Activated CD8-positive, alpha-beta memory T cell treated with anti-CD3 and anti-CD28 coated beads, Interleukin-2, amount 10 ng/mL, durations not matched to agents 7 days and 5 days (primary cell): ENCODE measurements at regions of chr5 and their contacts with region 1.

Region 1: DNA sequence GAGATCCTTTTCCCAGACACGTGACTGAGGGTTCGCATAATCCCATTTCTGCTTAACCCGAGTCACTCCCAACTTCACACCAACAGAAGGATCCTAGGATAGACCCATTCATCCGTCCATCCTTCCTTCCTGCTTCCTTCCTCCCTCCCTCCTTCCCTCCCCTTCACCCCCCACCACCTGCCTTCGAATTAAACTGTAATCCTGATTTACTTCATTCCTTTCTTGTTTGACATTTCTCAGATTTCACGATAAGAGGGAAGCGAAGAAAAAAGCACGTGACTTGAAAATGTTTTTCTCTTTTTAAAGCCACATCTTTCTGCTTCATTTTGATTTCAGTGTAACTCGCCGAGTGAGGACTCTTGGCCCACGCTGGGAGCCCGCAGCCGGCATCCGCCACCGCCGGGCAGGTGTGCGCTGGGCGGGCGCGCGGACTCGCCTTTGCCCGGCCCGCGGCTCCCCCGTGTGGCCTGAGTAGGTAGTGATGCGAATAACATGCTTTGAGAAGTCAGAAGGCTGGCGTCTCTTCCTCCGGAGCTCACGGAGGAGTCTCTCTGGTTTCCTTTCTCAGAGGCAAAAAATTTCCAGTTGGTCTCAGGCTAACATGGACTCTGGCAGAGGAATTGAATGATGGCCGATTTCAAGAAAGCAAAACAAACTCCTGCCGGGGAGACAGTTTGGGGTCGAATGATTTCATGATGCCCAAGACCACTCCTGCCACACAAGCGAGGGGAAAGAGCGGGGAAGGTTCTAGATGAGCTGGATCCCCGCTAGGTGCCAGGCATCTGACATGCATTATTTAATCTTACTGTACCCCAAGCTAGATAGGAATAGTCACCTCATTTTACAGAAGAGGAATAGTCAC is 117.7 kb downstream of the SLC12A2 start:
- DNase-seq: peak; percentile 85
- ATAC-seq: peak; percentile 97
- H3K4me3 Mint-ChIP-seq: peak overlapping the region; percentile 4
- H3K27ac Mint-ChIP-seq: no peak overlapping the region
- H3K4me1 Mint-ChIP-seq: peaks cover 12% of the 10 kb centered on the region
- H3K27me3 Mint-ChIP-seq: peaks cover 3% of the 10 kb centered on the region

Region 2: DNA sequence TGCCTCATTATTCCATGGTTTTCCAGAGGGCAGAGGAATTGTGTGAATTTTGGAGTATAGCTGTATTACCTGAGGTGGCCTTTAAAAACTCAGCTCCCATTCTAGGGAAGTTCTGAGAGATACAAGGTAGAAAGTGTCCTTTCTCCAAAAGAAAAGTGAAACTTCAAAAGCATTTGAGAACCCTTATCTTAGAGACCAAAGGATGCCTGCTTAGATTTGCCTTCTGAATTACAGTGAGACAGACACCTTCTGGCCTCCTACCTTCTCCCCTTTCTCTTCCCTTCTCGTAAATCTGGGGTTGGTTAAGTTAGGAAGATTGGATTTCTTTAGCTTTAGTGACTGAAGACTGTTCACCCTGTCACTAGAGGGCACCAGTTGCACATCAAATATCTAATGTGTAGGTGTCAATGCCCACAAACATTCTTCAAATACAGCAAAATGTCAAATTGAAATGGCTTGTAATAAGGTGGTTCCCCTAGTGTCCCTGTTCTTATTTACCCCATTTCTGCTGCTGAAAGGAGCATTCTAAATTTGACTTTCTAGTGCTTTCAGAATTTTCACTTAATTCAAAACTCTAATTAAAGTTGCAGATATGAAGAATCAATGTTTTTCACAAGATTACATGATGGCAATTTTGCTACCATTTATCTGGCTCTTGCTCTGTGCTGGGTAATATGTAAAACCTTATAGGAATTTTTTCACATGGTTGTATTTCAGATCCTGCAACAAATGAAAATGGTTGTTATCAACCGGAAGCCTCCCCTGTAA is 637.1 kb before region 1 on chr5:
- CTCF ChIA-PET with region 1: interaction called, 17 read pairs
- DNase-seq: peak; percentile 63
- ATAC-seq: peak; percentile 70
- H3K4me3 Mint-ChIP-seq: no peak overlapping the region
- H3K27ac Mint-ChIP-seq: no peak overlapping the region
- H3K4me1 Mint-ChIP-seq: peaks cover 27% of the 10 kb centered on the region
- H3K27me3 Mint-ChIP-seq: peaks cover 23% of the 10 kb centered on the region

Region 3: GRCh38 chr5:127572930-127573329 is 628.4 kb before region 1 on chr5:
- CTCF ChIA-PET with region 1: interaction called, 10 read pairs
- DNase-seq: no peak
- ATAC-seq: peak; percentile 61
- H3K4me3 Mint-ChIP-seq: no peak overlapping the region
- H3K27ac Mint-ChIP-seq: no peak overlapping the region
- H3K4me1 Mint-ChIP-seq: peaks cover 45% of the 10 kb centered on the region
- H3K27me3 Mint-ChIP-seq: peaks cover 2% of the 10 kb centered on the region